PC-9 (cell line): ENCODE measurements at regions of chr17 and their contacts with region 1.

Region 1: GRCh38 chr17:78360371-78361224 is 721 bp upstream of the SOCS3 start:
- DNase-seq: peak; percentile 59 to 95
- H3K4me3 ChIP-seq: peak overlapping the region; percentile 75
- H3K27ac ChIP-seq: peak overlapping the region; percentile 65
- H3K4me1 ChIP-seq: peaks cover 26% of the 10 kb centered on the region
- H3K27me3 ChIP-seq: no peaks in the 10 kb centered on the region
- CTCF ChIP-seq: peak; percentile 87

Region 2: GRCh38 chr17:78272181-78272913 is 88.3 kb before region 1 on chr17:
- CTCF ChIA-PET with region 1: no interaction called
- POLR2A ChIA-PET with region 1: no interaction called
- intact Hi-C with region 1: loop called (anchors 5 kb)
- DNase-seq: peak; percentile 36 to 58
- H3K4me3 ChIP-seq: peak overlapping the region; percentile 14; the same call in 1 of the 2 replicates
- H3K27ac ChIP-seq: no peak overlapping the region
- H3K4me1 ChIP-seq: no peaks in the 10 kb centered on the region
- H3K27me3 ChIP-seq: peaks cover 8% of the 10 kb centered on the region
- CTCF ChIP-seq: no peak

Region 3: DNA sequence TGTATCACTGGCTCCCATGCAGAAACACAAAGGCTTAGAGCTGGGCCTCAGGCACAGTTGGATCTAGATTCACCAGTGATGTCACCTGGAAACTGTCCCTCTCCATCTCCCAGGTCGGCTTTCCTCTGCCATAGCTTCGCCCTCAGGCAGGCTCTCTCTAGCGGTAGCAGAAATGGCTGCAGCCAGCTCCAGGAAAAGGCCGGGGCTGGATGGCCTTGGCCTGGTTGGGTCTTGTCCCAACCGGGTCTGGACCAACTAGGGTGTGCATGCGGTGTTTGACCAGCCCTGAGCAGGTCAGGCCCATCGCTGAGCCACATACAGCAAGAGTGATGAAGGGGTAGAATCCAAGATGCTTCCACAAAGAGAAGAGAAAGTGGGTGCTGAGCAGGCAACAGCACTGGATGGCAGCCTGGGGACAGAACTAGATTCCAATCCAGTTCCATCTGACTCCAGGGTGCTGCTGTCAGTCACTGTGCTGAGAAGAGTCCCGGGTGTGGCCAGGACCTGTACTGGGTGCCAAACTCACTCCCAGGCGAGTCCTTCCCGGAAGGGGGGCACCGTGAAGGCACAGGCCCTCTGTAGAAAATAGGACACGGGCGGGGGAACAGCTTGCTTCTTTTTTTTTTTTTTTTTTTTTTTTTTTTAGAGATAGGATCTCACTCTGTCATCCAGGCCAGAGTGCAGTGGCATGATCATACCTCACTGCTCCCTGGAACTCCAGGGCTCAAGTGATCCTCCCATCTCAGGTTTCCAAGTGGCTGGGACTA is 52.5 kb before region 1 on chr17:
- CTCF ChIA-PET with region 1: interaction called, 13 read pairs
- POLR2A ChIA-PET with region 1: no interaction called
- intact Hi-C with region 1: no loop called
- DNase-seq: peak; percentile 56 to 70
- H3K4me3 ChIP-seq: no peak overlapping the region
- H3K27ac ChIP-seq: peak overlapping the region; percentile 72
- H3K4me1 ChIP-seq: peaks cover 19% of the 10 kb centered on the region
- H3K27me3 ChIP-seq: no peaks in the 10 kb centered on the region
- CTCF ChIP-seq: no peak

Region 4: GRCh38 chr17:78337244-78338109 is 23.1 kb before region 1 on chr17:
- CTCF ChIA-PET with region 1: no interaction called
- POLR2A ChIA-PET with region 1: interaction called, 5 read pairs
- intact Hi-C with region 1: loop called (anchors 2 kb)
- DNase-seq: peak; percentile 52 to 71
- H3K4me3 ChIP-seq: no peak overlapping the region
- H3K27ac ChIP-seq: peak overlapping the region; percentile 100
- H3K4me1 ChIP-seq: peaks cover 91% of the 10 kb centered on the region
- H3K27me3 ChIP-seq: no peaks in the 10 kb centered on the region
- CTCF ChIP-seq: no peak

Region 5: DNA sequence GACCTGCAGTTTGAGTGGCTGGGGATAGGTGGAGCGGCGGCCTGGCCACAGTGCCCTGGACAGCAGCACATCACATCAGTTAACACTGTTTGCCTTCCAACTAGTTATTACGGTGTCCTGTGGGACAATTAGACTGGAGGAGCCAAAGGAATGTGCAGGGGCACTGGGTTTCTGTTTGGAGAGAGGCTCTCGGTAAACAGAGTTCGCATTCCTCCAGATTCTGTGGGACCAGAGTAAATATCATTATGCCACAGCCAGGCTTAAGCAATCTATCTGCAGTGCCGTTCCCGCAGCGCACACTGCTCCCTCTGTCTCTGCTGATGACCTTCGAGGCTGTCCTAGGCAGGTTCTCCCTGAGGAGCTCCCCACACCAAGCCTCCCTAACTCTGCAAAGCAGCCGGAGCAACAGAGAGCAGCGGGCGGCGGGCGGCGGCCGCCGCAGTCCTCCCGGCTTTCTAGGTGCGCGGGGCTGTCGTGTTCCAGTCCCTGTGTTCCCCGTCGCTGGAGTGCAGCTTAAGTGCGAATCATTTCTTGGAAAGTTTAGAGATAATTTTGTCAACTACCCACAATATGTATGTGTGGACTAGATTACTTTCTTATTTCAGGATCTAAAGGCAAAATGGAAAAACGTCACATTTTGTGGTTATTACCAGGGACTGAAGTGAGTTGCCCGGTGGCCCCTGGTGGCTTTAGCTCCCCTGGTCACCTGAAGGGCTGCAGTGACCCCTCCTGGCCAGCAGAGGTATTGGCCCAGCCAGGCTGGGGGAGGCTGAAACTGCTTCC is 61.1 kb after region 1 on chr17:
- CTCF ChIA-PET with region 1: no interaction called
- POLR2A ChIA-PET with region 1: no interaction called
- intact Hi-C with region 1: loop called (anchors 1 kb)
- DNase-seq: peak; percentile 47 to 77
- H3K4me3 ChIP-seq: no peak overlapping the region
- H3K27ac ChIP-seq: no peak overlapping the region
- H3K4me1 ChIP-seq: no peaks in the 10 kb centered on the region
- H3K27me3 ChIP-seq: no peaks in the 10 kb centered on the region
- CTCF ChIP-seq: peak; percentile 87